Colonic mucosa (tissue), 4 donors: ENCODE measurements at regions of chr12 and their contacts with region 1.

Region 1: GRCh38 chr12:120429368-120429767 is 8.5 kb upstream of the COX6A1 start:
- DNase-seq: no peak
- H3K4me3 ChIP-seq: no peak overlapping the region
- H3K27ac ChIP-seq: no peak overlapping the region
- H3K4me1 ChIP-seq: no peaks in the 10 kb centered on the region
- H3K27me3 ChIP-seq: no peaks in the 10 kb centered on the region
- CTCF ChIP-seq: no peak

Region 2: DNA sequence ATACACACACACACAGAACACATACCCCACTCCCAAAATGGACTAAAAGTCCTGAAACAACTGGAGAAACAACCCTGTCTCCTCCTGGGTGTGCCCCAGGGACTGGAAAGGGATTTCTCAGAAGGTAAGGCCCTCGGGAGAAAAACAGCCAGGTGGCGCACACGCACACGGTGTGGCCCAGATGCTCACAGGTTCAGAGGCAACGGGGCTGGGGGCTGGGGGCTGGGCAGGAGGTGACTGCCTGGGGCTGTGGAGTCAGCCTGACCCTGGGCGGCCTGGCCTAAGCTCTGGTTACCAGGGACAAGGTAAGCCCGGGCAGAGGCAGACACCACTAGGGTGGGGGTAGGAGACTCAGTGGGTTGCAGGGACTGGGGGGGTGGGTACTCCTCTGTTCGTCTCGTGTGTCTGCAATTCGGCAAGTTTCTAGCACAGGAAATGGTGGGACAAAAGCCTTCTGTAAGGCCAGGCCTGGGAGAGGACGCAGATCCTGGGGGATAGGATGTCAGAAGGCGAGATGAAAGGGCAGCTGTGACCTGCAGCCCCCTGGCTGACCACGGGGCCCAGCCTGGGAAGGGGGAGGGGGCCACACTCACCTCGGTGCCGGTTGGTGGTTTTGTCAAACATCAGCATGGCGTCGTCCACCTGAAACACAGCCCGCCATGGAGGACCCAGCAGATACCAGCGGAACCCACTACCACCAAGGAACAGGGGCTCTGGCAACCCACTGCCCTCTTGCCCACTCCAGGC is 70.8 kb before region 1 on chr12:
- intact Hi-C with region 1: loop called (anchors 2 kb)
- DNase-seq: no peak
- H3K4me3 ChIP-seq: no peak overlapping the region
- H3K27ac ChIP-seq: no peak overlapping the region
- H3K4me1 ChIP-seq: no peaks in the 10 kb centered on the region
- H3K27me3 ChIP-seq: no peaks in the 10 kb centered on the region
- CTCF ChIP-seq: no peak